ENCODE measurements at regions of chr10 and their contacts with region 1.

Region 1: DNA sequence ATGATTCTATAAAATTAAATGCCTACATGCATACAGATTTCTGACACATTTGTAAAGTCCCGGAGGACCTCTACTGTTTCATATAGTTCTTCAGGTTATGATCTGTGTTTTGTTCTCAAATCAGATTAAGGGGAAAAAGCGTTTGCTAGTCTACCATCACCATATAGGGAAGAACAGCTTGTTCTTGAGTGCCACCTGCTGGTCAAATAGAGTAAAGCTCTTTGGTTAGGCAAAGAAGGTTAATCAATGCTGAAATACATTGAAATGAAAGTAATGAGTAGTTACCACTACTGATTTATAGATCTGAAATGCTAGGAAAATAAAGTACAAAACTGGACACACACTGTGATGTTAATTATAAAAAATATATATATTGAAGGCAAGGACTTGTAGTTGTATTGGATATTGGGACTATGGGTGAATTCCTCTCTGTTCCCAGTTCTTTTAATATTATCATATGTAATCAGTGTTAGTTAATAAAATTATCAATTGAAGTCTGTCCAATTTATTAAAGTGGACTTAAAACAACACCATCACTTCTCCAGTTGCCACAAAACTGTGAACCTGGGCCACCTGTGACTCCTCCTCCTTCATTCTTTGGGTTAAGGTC is 72.6 kb upstream of the PDLIM1 start:
- H3K4me3 ChIP-seq: no peak overlapping the region
- H3K27ac ChIP-seq: no peak overlapping the region
- H3K4me1 ChIP-seq: no peaks in the 10 kb centered on the region
- CTCF ChIP-seq: peak; percentile 58; the same call in 1 of the 2 replicates

Region 2: DNA sequence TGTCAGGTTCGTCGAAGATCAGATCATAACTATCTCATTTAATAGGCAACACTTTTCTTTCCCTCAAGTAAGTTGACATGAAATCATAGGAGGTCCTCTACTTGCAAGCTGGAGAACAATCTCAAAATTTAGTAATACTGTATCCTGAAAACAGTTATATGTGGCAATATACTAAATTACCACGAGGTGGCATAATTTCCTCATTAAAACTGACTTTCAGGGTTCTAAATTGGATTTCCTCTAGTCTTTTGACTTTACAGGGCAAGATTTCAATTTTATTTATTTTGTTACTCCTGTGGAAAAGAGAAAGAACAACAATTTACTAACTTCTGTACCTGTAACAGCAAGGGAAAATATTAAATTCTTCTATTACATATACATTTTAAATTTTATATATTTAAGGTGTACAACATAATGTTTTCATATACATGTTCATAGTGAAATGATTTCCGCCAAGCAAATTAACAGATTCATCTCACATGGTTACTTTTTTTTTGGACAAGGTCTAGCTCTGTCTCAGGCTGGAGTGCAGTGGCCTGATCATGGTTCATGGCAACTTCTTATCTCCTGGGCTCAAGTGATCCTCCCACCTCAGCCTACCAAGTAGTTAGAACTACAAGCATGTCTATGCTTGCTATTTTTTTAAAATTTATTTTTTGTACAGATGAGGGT is 733.3 kb before region 1 on chr10:
- CTCF ChIA-PET with region 1: interaction called, 10 read pairs
- POLR2A ChIA-PET with region 1: no interaction called
- H3K4me3 ChIP-seq: no peak overlapping the region
- H3K27ac ChIP-seq: no peak overlapping the region
- H3K4me1 ChIP-seq: no peaks in the 10 kb centered on the region
- CTCF ChIP-seq: no peak

Region 3: GRCh38 chr10:95183271-95184230 is 179.9 kb before region 1 on chr10:
- CTCF ChIA-PET with region 1: interaction called, 15 read pairs
- POLR2A ChIA-PET with region 1: no interaction called
- H3K4me3 ChIP-seq: peak overlapping the region; percentile 64
- H3K27ac ChIP-seq: peak overlapping the region; percentile 68; the same call in 1 of the 2 replicates
- H3K4me1 ChIP-seq: no peaks in the 10 kb centered on the region
- CTCF ChIP-seq: peak; percentile 98

Region 4: DNA sequence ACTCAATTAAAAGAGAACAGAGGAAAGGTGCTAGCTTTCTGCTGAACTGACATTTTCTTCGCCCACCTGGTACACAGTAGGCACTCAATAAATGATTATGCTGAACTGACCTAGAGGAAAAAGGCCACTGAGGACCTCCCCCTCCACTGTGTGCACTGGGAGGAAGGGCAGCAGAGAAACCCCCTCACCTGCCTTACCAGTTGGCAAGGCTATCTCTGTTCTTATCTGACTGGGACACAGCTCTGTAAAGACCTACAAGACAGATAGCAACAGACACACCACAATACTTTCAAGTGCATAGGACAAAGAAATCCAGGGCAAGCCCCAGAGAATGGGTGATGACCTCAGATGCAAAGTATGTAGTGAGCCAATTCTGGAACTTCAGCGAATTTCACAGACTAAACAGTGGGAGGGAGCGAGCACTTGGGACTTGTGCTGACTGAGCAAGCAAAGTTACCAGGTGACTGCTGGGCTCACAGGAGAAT is 103.0 kb before region 1 on chr10:
- CTCF ChIA-PET with region 1: interaction called, 13 read pairs
- POLR2A ChIA-PET with region 1: no interaction called
- H3K4me3 ChIP-seq: no peak overlapping the region
- H3K27ac ChIP-seq: no peak overlapping the region
- H3K4me1 ChIP-seq: peaks cover 7% of the 10 kb centered on the region
- CTCF ChIP-seq: no peak

Region 5: GRCh38 chr10:95308389-95309302 is 54.8 kb before region 1 on chr10:
- CTCF ChIA-PET with region 1: interaction called, 13 read pairs
- POLR2A ChIA-PET with region 1: interaction called, 3 read pairs
- H3K4me3 ChIP-seq: no peak overlapping the region
- H3K27ac ChIP-seq: peak overlapping the region; percentile 42
- H3K4me1 ChIP-seq: peaks cover 25% of the 10 kb centered on the region
- CTCF ChIP-seq: no peak

Region 6: DNA sequence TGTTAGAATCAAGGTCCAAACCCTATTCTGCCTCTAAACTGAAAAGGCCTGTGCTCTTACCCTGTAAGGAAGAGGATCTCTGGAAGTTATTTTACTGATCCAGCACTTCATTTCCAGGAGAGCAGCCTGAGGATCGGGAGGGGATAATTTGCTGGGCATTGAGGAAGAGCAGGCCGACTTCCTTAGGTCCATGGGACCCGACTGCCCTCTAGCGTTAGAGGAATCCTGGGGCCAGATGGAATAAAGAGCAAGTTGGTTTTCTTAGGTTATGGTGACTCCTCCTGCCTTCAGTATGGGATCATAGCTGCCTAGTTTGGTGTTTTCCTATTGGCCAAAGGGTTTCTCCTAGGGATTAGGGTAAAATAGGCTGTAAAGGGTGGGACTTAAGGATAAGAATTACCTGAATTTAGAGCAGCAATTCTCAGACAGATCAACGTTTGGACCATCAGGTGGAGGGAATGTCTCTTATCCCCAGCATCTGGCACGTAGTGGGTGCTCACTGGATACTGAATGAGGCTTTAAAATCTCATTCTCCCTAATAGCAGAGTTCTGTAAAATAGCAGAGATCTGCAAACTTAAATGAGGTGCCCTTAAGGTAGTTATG is 237.8 kb after region 1 on chr10:
- CTCF ChIA-PET with region 1: interaction called, 15 read pairs
- POLR2A ChIA-PET with region 1: no interaction called
- H3K4me3 ChIP-seq: no peak overlapping the region
- H3K27ac ChIP-seq: no peak overlapping the region
- H3K4me1 ChIP-seq: no peaks in the 10 kb centered on the region
- CTCF ChIP-seq: peak; percentile 87; the same call in 1 of the 2 replicates